Endothelial cell of umbilical vein (primary cell): ENCODE measurements at regions of chr17 and their contacts with region 1.

Region 1: GRCh38 chr17:49567871-49568694 is 7.6 kb upstream of the NXPH3 start:
- DNase-seq: peak; percentile 79
- H3K4me3 ChIP-seq: peak overlapping the region; percentile 10 to 34 (median 25)
- H3K27ac ChIP-seq: no peak overlapping the region
- H3K4me1 ChIP-seq: peaks cover 5% of the 10 kb centered on the region
- H3K27me3 ChIP-seq: peaks cover 6 to 16% of the 10 kb centered on the region in 2 experiments
- CTCF ChIP-seq: peak; percentile 90 to 93
- POLR2A ChIP-seq: no peak

Region 2: DNA sequence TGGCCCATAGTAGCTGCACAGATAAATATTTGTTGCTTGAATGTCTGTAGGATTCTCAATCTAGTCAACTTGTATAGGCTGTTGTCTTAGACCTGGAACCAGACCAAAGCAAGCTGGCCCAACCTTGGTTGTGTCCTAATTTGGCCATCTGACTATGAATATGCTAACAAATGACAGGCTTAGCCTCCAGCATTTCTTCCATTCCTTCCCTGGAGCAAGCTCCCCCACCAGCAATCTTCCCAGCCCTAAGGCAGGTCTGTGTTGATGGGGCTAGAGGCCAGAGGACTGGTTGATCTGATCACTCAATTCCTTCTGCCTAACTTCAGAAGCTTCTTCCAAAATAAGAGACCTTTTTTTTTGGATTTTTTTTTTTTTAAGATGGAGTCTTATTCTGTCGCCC is 328.1 kb before region 1 on chr17:
- CTCF ChIA-PET with region 1: no interaction called
- POLR2A ChIA-PET with region 1: no interaction called
- dilution Hi-C with region 1: no loop called
- intact Hi-C with region 1: no loop called
- DNase-seq: no peak
- H3K4me3 ChIP-seq: no peak overlapping the region
- H3K27ac ChIP-seq: no peak overlapping the region
- H3K4me1 ChIP-seq: no peaks in the 10 kb centered on the region
- H3K27me3 ChIP-seq: peaks cover 0 to 7% of the 10 kb centered on the region in 2 experiments
- CTCF ChIP-seq: no peak
- POLR2A ChIP-seq: no peak

Region 3: DNA sequence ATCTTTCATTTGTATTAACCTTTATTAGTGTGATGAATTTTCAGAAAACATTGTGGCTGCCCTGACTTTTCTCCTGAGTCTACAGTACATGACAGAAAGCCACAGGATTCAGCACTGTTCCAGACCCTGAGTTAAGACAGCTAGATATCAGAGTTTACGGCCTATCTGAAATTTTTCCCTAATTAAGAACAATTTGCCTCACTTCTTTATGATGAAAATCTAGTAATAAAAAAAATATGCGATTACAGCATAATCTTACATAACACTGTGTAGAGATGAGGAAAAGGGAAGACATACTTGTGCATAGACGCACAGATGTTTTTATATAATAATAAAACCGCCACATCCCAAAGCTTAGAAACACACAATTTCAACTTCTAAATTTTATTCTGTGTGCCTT is 102.6 kb after region 1 on chr17:
- CTCF ChIA-PET with region 1: interaction called, 15 read pairs
- POLR2A ChIA-PET with region 1: no interaction called
- dilution Hi-C with region 1: no loop called
- intact Hi-C with region 1: no loop called
- DNase-seq: no peak
- H3K4me3 ChIP-seq: peak overlapping the region in 1 of 3 experiments; percentile 53
- H3K27ac ChIP-seq: peak overlapping the region; percentile 43
- H3K4me1 ChIP-seq: peaks cover 17% of the 10 kb centered on the region
- H3K27me3 ChIP-seq: no peaks in the 10 kb centered on the region
- CTCF ChIP-seq: no peak
- POLR2A ChIP-seq: no peak

Region 4: DNA sequence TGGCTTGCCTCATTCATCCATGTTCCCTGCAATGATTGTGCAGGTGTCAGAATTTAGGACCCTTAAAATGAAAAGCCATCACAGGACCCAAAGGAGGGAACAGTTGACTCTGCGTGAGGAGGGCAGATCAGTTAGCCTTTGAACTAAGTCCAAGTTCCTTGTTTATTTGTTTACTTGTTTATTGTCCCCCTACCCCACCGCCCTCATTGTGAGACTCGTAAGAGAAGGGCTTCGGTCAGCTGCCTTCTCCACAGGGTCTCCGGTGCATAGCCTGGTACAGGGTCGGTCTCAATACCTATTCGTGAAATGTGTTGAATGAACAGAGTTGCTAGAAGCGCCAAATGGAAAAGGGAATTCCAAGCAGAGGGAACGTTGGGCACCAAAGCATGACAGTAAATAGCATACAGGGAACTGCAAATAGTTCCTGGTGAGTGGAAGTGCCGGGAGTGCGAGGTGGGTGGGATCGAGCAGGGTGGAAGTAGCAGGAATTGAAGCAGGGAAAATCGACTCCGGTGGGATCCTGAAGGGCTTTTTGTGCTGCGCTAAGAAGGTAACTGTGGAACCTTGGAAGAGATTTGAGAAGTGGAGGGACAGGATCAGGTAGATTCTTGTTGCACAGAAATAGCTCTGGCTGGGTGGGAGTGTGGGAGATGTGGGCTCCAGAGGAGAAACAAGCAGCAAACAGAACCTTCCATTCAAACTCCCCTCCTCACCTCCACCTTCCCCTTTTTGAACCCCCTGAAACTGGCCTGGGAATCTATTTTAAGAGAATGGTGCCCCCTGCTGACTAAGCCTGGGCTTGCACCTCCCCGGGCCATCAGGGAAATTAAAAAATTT is 127.0 kb after region 1 on chr17:
- CTCF ChIA-PET with region 1: interaction called, 786 read pairs
- POLR2A ChIA-PET with region 1: interaction called, 3 read pairs
- dilution Hi-C with region 1: no loop called
- intact Hi-C with region 1: loop called (anchors 1 kb)
- DNase-seq: peak; percentile 31
- H3K4me3 ChIP-seq: no peak overlapping the region
- H3K27ac ChIP-seq: no peak overlapping the region
- H3K4me1 ChIP-seq: peaks cover 16% of the 10 kb centered on the region
- H3K27me3 ChIP-seq: no peaks in the 10 kb centered on the region
- CTCF ChIP-seq: peak; percentile 77 to 92
- POLR2A ChIP-seq: no peak

Region 5: GRCh38 chr17:49779739-49780231 is 211.7 kb after region 1 on chr17:
- CTCF ChIA-PET with region 1: interaction called, 11 read pairs
- POLR2A ChIA-PET with region 1: no interaction called
- dilution Hi-C with region 1: no loop called
- intact Hi-C with region 1: loop called (anchors 2 kb)
- DNase-seq: peak; percentile 79
- H3K4me3 ChIP-seq: no peak overlapping the region
- H3K27ac ChIP-seq: no peak overlapping the region
- H3K4me1 ChIP-seq: peaks cover 26% of the 10 kb centered on the region
- H3K27me3 ChIP-seq: no peaks in the 10 kb centered on the region
- CTCF ChIP-seq: peak; percentile 48 to 67
- POLR2A ChIP-seq: no peak